BJ (cell line): ENCODE measurements at regions of chr3 and their contacts with region 1.

Region 1: DNA sequence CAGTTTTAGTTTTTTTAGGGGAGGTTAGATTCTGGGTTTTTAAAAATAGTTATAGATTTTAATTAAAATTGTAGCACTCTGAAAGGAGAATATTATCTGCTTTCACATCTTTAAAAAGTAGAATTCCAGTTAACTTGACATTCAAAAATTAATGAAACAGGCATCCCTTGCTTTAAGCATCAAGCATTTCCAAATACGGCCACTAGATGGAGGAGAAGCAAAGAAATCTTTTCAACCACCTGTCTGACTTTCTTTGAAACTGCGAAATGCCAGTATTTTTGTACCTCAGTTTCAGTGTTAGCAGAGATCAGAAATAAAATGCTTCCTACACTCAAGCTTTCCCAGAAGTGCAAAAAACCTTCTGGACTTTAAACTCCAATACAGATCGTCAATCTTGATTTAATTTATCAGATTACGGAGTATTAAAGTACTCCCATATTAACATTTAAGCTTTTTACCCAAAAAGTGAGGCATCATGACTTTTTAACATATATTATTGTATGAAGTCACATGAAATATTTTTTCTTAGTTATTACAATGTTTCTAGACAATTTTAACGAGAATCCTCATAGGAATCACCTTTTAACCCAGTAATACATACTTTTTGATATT is 153.3 kb downstream of the P3H2 start:
- DNase-seq: no peak
- H3K4me3 ChIP-seq: no peak overlapping the region
- H3K27me3 ChIP-seq: no peaks in the 10 kb centered on the region
- CTCF ChIP-seq: peak; percentile 72

Region 2: GRCh38 chr3:189621948-189622603 is 345.3 kb before region 1 on chr3:
- CTCF ChIA-PET with region 1: no interaction called
- POLR2A ChIA-PET with region 1: no interaction called
- DNase-seq: no peak
- H3K4me3 ChIP-seq: no peak overlapping the region
- H3K27me3 ChIP-seq: no peaks in the 10 kb centered on the region
- CTCF ChIP-seq: no peak

Region 3: GRCh38 chr3:189988854-189989253 is 21.5 kb after region 1 on chr3:
- CTCF ChIA-PET with region 1: no interaction called
- POLR2A ChIA-PET with region 1: no interaction called
- DNase-seq: no peak
- H3K4me3 ChIP-seq: no peak overlapping the region
- H3K27me3 ChIP-seq: no peaks in the 10 kb centered on the region
- CTCF ChIP-seq: no peak

Region 4: GRCh38 chr3:190178779-190179178 is 211.4 kb after region 1 on chr3:
- CTCF ChIA-PET with region 1: no interaction called
- POLR2A ChIA-PET with region 1: no interaction called
- DNase-seq: no peak
- H3K4me3 ChIP-seq: no peak overlapping the region
- H3K27me3 ChIP-seq: no peaks in the 10 kb centered on the region
- CTCF ChIP-seq: no peak

Region 5: GRCh38 chr3:190197346-190197763 is 230.0 kb after region 1 on chr3:
- CTCF ChIA-PET with region 1: interaction called, 10 read pairs
- POLR2A ChIA-PET with region 1: no interaction called
- DNase-seq: no peak
- H3K4me3 ChIP-seq: no peak overlapping the region
- H3K27me3 ChIP-seq: no peaks in the 10 kb centered on the region
- CTCF ChIP-seq: no peak

Region 6: DNA sequence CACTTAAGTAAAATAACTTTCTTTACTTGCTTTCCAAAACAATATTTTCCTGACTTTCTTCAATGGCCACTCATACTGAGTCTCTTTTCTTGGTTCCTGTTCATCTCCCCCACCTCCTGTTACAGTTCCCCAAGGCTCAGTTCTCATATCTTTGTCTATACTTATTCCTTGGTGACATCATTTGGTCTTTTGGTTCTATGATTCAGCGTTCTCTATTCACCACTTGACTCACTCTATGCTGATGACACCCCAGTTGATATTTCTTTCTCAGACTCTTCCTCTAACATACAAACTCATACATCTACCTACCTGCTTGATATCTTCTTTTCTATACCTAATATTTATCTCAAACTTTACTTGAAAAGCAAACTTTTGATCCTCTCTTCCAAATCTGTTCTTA is 238.4 kb after region 1 on chr3:
- CTCF ChIA-PET with region 1: interaction called, 10 read pairs
- POLR2A ChIA-PET with region 1: no interaction called
- DNase-seq: no peak
- H3K4me3 ChIP-seq: no peak overlapping the region
- H3K27me3 ChIP-seq: no peaks in the 10 kb centered on the region
- CTCF ChIP-seq: no peak